ENCODE measurements at regions of chr6 and their contacts with region 1.

Region 1: GRCh38 chr6:145814501-145815308 is at the start of gene FBXO30:
- DNase-seq: peak; percentile 48
- ATAC-seq: peak; percentile 95
- H3K4me3 ChIP-seq: peak within 1 kb of the TSS; percentile 80 to 91
- H3K27ac ChIP-seq: peak within 1 kb of the TSS; percentile 95
- H3K4me1 ChIP-seq: peaks cover 19% of the 10 kb centered on the region; the same call in 1 of the 2 replicates
- H3K27me3 ChIP-seq: no peaks in the 10 kb centered on the region
- CTCF ChIP-seq: no peak
- total RNA-seq, gene FBXO30: 9.5 TPM

Region 2: GRCh38 chr6:145147981-145148783 is 666.5 kb before region 1 on chr6:
- CTCF ChIA-PET with region 1: no interaction called
- POLR2A ChIA-PET with region 1: no interaction called
- in situ Hi-C with region 1: no loop called
- intact Hi-C with region 1: no loop called
- DNase-seq: peak; percentile 66
- ATAC-seq: peak; percentile 45; the same call in 1 of the 2 replicates
- H3K4me3 ChIP-seq: no peak overlapping the region
- H3K27ac ChIP-seq: no peak overlapping the region
- H3K4me1 ChIP-seq: no peaks in the 10 kb centered on the region
- H3K27me3 ChIP-seq: no peaks in the 10 kb centered on the region
- CTCF ChIP-seq: no peak

Region 3: DNA sequence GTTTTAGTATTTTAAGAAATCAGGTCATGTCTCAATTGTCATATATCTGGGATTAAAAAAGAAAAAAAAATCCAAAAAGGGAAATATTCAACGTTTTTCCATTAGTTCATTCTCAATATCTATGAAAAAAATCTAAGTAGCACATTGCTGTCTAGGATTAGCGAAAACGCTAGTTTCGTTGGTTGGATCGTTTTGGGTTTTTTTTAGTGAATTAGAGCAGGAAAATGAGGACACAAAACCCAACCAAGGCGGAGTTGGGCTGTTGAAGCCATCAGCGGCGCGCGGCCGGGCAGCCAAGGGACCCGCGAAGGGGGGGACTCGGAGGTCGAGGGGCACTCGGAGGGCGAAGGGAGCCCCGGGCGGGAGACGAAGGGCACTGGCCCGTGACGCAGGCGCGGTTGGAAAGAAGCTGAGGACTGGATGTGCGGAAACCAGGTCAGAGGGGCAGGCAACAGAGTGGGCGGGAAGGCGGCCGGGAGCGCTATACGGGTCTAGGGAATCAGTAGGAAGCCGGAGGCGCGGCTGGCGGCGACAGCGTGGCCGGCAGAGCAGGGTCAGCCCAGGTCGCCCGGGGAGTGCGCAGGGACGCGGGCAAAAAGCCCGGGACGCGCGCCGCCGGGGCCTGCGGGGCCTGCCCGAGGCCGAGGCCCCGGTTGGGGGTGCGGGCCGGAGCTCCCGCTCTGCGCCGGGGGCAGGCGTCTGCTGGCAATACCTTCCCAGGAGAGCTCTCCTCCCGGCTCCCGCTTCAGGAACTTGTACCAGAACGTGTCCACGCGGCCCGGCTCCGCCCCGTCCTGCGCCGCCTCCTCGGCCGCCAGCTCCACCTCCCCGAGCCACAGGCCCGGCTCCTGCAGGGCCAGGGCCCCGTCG is 80.0 kb before region 1 on chr6:
- CTCF ChIA-PET with region 1: no interaction called
- POLR2A ChIA-PET with region 1: interaction called, 3 read pairs
- in situ Hi-C with region 1: no loop called
- intact Hi-C with region 1: loop called (anchors 2 kb)
- DNase-seq: no peak
- ATAC-seq: peak; percentile 98
- H3K4me3 ChIP-seq: peak overlapping the region; percentile 83 to 87
- H3K27ac ChIP-seq: peak overlapping the region; percentile 98
- H3K4me1 ChIP-seq: peaks cover 17% of the 10 kb centered on the region
- H3K27me3 ChIP-seq: no peaks in the 10 kb centered on the region
- CTCF ChIP-seq: no peak

Measured in Panc1 (cell line).